ENCODE measurements at regions of chr2 and their contacts with region 1.

Region 1: GRCh38 chr2:237738255-237738654 is 60.3 kb upstream of the RBM44 start:
- DNase-seq: no peak
- H3K4me3 ChIP-seq: no peak overlapping the region
- CTCF ChIP-seq: no peak
- POLR2A ChIP-seq: no peak

Region 2: DNA sequence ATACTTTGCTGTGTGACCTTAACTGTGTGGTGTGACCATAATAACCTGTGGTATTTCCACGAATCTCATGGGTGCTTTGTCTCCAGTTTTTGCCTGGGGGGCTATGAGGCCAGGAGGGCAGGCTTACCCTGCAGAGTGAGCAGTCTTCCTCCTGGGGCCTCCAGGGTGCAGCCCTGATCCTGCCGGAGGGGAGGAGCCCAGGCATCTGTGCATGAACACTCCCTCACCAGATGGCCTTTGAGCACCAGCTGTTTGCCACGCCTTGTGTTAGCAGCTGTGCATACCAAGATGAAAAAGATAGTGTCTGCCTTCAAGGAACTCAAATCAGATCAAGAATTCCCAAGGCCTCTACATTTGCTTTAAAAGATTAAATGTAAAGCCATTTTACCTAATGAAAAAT is 14.7 kb before region 1 on chr2:
- intact Hi-C with region 1: loop called (anchors 1 kb)
- DNase-seq: peak in 1 of 2 donors; percentile 79
- H3K4me3 ChIP-seq: no peak overlapping the region
- CTCF ChIP-seq: no peak
- POLR2A ChIP-seq: no peak

Region 3: DNA sequence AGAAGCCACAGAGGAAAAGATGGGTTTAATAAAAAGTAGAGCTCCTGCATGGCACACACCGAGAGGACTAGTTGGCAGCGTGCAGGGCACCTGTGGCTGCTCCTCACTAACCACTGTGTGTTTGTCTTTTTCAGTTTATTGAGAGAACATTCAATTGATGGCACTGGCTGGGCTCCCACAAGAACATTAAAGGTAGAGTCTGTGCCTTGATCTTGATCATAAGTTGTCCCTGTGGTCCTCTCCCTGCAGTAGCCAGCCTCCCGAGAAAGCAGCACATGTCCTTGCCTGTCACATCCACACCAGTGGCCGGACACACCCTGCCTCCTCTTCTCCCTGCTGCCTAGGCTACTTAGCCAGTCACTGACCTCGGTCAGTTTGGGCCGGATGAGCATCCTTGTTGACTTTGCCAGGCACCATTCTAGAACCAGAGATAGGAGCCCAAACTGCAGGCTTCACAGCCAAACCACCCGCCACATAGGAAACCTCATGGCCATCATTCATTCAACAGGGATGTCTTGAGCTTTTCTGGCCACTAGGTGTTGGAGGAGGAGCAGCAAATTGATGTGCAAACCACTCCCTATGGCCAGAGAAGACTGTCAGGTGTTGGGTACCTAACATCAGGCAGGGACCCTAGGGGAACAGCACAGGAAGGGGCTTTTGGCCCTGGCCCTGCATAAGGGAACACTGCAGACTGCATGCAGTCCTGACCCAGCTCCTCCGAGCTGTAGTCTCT is 292.3 kb after region 1 on chr2:
- intact Hi-C with region 1: no loop called
- DNase-seq: no peak
- H3K4me3 ChIP-seq: no peak overlapping the region
- CTCF ChIP-seq: no peak
- POLR2A ChIP-seq: no peak